GM23248 (cell line): ENCODE measurements at regions of chr4 and their contacts with region 1.

Region 1: DNA sequence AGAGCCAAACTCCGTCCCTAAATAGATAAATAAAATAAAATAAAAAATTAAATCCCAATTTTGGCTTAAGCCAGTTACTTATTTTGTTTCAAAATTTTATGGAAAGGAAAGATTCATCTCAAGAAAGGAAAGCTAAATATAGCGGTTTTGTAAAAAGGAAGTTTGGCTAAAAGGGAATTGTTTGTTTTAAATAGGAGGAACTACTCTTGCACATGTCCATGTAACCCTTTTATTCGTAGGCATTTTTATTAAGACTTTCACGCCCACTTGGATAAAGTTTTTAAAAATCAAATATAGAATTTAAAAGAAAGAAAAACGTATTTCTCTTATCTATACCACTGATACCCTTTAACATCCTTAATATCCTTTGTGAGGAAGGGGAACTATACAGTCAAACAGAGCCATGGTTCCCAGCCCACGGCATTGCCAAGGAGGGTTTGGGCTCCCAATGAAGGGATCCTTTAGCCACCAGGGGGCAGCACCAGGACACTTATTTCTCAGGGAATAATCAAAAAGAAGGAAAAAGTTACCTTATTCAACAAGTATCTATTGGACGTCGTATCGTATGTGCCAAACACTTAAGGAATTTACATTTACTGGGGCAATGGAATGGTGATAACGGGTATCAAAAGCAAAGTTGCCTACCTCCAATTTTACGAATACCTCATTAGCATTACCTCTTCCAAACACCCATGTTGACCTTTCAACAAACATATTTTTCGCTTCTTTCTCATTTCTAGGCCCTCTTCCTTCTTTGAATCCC is 27.7 kb downstream of the CDKN2AIP start:
- DNase-seq: peak; percentile 81
- H3K4me3 ChIP-seq: no peak overlapping the region
- H3K27ac ChIP-seq: no peak overlapping the region
- H3K4me1 ChIP-seq: peaks cover 10% of the 10 kb centered on the region
- H3K27me3 ChIP-seq: no peaks in the 10 kb centered on the region

Region 2: DNA sequence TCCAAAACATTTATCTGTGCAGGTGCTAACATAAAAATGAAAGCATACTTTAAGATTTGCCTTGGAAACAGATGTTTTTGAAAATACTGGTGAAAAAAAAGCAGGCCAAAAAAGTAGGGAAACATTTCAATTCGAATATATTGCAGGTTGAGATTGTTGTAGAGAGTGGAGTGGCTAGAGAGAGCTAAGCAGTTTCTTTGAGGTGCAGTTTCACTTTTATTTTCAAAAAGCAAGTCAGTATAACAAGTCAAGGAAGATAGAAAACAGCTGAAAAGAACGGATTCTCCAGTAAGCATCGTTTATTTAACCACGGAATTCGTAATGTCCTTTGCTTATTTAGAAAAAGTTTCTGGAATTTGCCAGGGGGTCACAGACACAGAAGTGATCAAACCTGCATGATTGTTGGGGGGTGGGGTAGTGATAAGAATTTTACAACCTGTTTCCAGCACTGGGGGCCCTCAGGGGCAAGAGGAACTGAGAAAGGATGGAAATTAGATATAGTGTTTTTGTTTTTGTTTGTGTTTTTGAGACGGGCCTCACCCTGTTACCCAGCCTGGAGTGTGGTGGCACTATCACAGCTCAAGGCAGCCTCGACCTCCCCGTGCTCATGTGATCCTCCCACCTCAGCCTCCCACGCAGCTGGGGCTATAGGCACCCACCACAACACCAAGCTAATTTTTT is 1053.9 kb before region 1 on chr4:
- in situ Hi-C with region 1: no loop called
- DNase-seq: no peak
- H3K4me3 ChIP-seq: no peak overlapping the region
- H3K27ac ChIP-seq: no peak overlapping the region
- H3K4me1 ChIP-seq: no peaks in the 10 kb centered on the region
- H3K27me3 ChIP-seq: no peaks in the 10 kb centered on the region

Region 3: DNA sequence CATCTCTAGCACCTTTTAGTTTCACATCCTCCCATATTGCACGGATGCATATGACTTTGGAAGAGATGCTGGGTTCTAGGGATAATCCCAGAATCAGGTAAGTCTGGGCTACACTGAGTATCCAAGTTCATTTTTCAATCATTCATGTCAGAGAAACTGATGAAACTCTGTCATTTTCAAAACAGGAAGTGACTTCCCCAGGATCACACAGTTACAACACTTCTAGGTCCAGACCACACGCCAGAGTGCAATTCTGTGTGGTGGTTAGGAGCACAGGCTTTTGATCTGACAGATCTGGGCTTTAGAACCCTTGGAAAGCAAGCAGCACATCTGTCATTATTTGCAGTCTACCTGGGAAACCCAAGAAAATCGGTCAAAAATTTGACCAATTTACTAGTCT is 79.8 kb before region 1 on chr4:
- in situ Hi-C with region 1: no loop called
- DNase-seq: no peak
- H3K4me3 ChIP-seq: no peak overlapping the region
- H3K27ac ChIP-seq: no peak overlapping the region
- H3K4me1 ChIP-seq: no peaks in the 10 kb centered on the region
- H3K27me3 ChIP-seq: no peaks in the 10 kb centered on the region

Region 4: GRCh38 chr4:183602557-183603027 is 130.5 kb after region 1 on chr4:
- in situ Hi-C with region 1: loop called (anchors 5 kb)
- DNase-seq: peak; percentile 53
- H3K4me3 ChIP-seq: no peak overlapping the region
- H3K27ac ChIP-seq: no peak overlapping the region
- H3K4me1 ChIP-seq: no peaks in the 10 kb centered on the region
- H3K27me3 ChIP-seq: no peaks in the 10 kb centered on the region